BJ (cell line): ENCODE measurements at regions of chr4 and their contacts with region 1.

Region 1: DNA sequence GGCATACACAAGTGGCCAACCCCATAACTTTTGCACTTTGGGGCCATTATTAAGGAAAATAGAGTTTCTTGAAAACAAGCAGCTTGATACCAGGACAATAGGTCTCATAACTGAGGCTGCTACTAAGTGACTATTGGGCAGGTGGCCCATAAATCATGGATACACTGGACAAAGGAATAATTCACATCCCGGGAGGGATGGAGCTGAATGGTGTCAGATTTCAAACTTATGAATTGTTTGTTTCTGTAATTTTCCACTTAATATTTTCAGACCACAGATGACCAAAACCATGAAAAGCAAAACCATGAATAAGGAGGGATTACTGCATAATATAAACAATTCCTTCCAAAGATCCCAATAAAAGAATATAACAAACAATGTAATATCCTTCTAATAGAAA is 114.4 kb downstream of the WDFY3 start:
- DNase-seq: no peak
- H3K4me3 ChIP-seq: no peak overlapping the region
- H3K27me3 ChIP-seq: no peaks in the 10 kb centered on the region
- CTCF ChIP-seq: no peak

Region 2: DNA sequence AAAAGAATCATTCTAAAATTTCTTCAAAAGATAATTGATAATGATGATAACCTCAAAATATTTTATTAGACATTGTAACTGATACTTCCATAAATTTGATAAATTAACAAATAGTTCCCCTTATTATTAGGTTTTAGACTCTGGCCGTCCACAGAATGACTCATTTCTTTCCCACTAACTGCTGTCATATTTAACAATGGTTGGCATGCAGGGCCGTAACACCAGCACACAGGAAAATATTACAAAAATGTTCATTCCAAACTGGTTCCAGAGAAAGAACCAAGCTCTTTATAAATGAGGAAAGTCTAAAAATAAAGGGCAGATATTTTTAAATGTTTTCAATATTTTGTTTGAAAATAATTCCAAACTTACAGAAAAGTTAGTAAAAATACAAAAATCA is 86.2 kb after region 1 on chr4:
- CTCF ChIA-PET with region 1: no interaction called
- POLR2A ChIA-PET with region 1: interaction called, 13 read pairs
- DNase-seq: peak; percentile 42
- H3K4me3 ChIP-seq: no peak overlapping the region
- H3K27me3 ChIP-seq: no peaks in the 10 kb centered on the region
- CTCF ChIP-seq: no peak